Heart right ventricle (tissue), 16 donors: ENCODE measurements at regions of chr19 and their contacts with region 1.

Region 1: DNA sequence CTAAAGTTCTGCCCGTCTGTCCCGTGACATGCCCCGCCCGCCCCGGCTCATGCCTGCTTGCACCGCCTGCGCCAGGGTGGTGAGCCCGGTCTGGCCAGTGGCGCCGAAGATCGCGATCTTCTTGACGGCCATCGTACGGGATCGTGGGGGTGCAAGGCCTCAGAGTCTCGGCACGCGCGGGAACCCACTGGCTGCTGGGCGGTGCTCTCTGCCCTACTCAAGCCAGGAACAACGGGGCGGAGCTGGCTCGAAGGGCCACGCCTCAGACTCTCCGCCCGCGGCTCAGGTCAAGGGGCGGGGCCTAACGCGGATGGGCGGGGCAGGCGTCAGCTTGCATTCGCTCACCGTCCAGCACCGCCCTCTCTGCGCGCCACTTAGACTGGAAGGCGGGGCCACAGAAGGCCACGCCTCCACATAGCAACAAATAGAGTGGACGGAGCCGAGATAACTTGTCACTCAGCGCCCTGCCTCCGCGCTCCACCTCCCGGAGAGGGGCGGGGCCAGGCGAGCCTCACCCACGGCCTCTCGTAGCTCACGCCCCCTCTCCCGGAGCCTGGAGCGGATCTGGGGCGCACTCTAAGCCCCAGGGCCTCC is at the start of gene BLVRB:
- DNase-seq: peak; percentile 99 to 100
- ATAC-seq: peak; percentile 94 to 98 (median 97)
- H3K4me3 ChIP-seq: peak within 1 kb of the TSS; percentile 49 to 97 (median 74)
- H3K27ac ChIP-seq: peak within 1 kb of the TSS; percentile 70 to 94 (median 86)
- H3K4me1 ChIP-seq: peaks cover 6 to 50% (median 26%) of the 10 kb centered on the region in 9 donors
- H3K27me3 ChIP-seq: peaks cover 0 to 26% (median 0%) of the 10 kb centered on the region in 7 donors
- CTCF ChIP-seq: no peak
- total RNA-seq, gene BLVRB: 70.9 to 144 (median 91.4) TPM

Region 2: GRCh38 chr19:40341601-40342482 is 123.8 kb before region 1 on chr19:
- intact Hi-C with region 1: no loop called
- DNase-seq: peak; percentile 75 to 80
- ATAC-seq: peak; percentile 86 to 99 (median 96)
- H3K4me3 ChIP-seq: peak overlapping the region in 6 of 10 donors; percentile 1 to 33 (median 22)
- H3K27ac ChIP-seq: peak overlapping the region; percentile 63 to 90 (median 84)
- H3K4me1 ChIP-seq: peaks cover 0 to 46% (median 20%) of the 10 kb centered on the region in 9 donors
- H3K27me3 ChIP-seq: no peaks in the 10 kb centered on the region
- CTCF ChIP-seq: no peak

Region 3: DNA sequence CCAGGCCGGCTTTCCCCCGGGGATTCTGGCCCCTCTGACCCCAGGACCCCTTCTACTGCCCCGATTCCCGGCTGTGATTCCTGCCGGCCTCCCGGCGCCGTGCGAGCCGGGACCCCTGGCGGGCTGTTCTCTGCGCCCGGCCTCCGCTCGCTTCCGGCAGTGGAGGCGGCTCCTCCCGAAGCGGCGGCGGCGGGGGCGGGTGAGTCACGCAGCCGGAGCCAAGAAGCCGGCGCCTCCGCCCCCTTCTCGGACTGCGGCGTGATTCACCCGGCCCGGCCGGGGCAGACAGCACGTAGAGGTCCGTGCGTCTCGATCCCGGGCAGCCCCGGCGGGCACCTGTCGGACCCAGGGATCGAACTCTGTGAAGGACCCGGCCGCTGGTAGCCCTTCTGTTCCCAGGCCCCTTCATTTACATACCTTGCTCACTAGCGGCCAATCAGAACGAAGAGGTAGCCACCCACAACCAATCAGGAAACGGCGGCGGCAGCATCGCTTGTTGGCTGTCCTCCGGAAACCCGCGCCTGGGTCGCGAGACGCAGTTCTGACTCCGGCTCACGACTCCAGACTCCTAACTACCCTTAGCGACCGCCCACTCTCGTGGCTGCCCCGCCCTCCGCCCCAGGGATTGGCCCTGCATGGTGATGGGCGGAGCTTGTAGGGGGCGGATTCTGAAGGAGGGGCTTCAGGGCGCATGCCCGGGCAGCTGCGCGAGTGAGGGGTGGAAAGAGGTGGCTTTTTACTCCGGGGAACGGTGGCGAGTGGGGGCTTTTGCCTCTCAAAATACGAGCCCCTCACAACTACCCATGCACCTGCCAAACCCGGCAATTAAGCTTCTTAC is 40.0 kb before region 1 on chr19 and contains the start of gene SERTAD1:
- intact Hi-C with region 1: loop called in 1 of 10 experiments (anchors 1 kb)
- DNase-seq: peak; percentile 100
- ATAC-seq: peak; percentile 89 to 95 (median 94)
- H3K4me3 ChIP-seq: peak within 1 kb of the TSS; percentile 66 to 91 (median 82)
- H3K27ac ChIP-seq: peak within 1 kb of the TSS; percentile 93 to 100 (median 98)
- H3K4me1 ChIP-seq: peaks cover 5 to 48% (median 40%) of the 10 kb centered on the region in 9 donors
- H3K27me3 ChIP-seq: no peaks in the 10 kb centered on the region
- CTCF ChIP-seq: peak in 8 of 9 donors; percentile 58 to 88 (median 83)
- total RNA-seq, gene SERTAD1: 6.3 to 16.8 (median 8.4) TPM

Region 4: DNA sequence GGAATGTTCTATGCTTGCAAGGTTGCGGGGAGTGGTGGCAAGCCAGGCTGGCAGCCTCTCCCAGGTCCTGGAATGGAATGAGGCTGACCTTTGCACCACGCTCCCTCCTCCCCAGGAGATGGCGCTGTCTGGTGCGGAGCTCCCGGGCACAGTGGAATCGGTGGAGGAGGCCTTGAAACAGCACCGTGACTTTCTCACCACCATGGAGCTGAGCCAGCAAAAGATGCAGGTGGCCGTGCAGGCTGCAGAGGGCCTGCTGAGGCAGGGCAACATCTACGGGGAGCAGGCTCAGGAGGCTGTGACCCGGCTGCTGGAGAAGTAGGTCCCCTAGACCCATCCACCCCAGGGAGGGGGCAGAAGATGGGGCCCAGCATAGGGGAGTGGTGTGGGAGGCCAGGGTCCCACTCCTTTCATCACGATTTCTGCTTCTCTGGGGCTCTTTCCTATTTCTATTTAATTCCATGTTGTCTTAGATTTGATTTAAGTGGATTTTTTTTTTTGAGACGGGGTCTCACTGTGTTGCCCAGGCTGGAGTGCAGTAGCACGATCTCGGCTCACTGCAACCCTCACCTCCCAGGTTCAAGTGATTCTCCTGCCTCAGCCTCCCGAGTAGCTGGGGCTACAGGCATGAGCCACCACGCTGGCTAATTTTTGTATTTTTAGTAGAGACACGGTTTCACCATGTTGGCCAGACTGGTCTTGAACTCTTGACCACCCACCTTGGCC is 57.8 kb after region 1 on chr19:
- intact Hi-C with region 1: loop called in 3 of 10 experiments (anchors 2 to 10 kb)
- DNase-seq: peak; percentile 35 to 36
- ATAC-seq: peak in 6 of 8 donors; percentile 32 to 71 (median 48)
- H3K4me3 ChIP-seq: no peak overlapping the region
- H3K27ac ChIP-seq: no peak overlapping the region
- H3K4me1 ChIP-seq: peaks cover 0 to 15% (median 0%) of the 10 kb centered on the region in 9 donors
- H3K27me3 ChIP-seq: peaks cover 0 to 24% (median 14%) of the 10 kb centered on the region in 7 donors
- CTCF ChIP-seq: peak in 7 of 9 donors; percentile 45 to 64 (median 51)

Region 5: DNA sequence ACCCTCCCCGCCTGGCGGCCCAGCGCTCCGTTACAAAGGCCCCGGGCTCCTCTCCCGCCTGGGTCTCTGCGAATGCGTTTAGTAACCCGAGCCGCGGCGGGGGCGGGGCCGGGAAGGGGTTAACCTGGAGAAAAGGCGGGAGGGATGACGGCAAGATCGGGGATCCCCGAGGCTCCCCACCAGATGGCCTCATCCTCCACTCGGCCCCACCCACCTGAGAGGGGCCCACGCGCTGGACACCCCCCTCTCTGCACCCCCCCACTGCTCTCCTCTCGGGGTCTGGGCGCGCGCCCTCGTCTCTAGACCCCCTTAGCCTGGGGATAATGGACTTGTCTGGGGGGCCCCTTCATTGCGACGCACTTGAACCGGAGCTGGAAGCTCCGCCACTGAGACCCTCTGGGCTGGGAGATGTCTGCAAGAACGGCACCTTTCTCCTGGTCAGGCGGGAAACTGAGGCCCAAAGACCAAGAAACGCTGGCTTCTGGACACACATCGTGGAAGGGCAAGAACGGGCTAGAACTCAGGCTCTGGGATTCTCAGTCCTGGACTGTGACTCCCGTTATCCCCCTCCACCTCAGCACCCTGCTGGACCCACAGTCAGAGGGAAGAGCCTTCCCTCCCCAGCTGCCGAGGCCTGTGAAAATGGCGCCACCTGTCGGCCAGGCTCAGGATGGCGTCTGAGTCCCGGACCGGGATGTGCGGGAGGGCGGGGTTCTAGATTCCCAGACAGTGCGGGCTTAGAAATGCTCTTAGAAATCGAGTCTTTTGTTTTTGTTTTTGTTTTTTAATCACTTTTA is 132.7 kb after region 1 on chr19:
- intact Hi-C with region 1: loop called in 6 of 10 experiments (anchors 2 to 10 kb)
- DNase-seq: peak; percentile 90
- ATAC-seq: peak; percentile 59 to 82 (median 68)
- H3K4me3 ChIP-seq: peak overlapping the region in 7 of 10 donors; percentile 8 to 81 (median 50)
- H3K27ac ChIP-seq: peak overlapping the region in 5 of 10 donors; percentile 41 to 96 (median 94)
- H3K4me1 ChIP-seq: peaks cover 24 to 64% (median 60%) of the 10 kb centered on the region in 9 donors
- H3K27me3 ChIP-seq: peaks cover 0 to 70% (median 29%) of the 10 kb centered on the region in 7 donors
- CTCF ChIP-seq: peak; percentile 95 to 100 (median 98)

Region 6: DNA sequence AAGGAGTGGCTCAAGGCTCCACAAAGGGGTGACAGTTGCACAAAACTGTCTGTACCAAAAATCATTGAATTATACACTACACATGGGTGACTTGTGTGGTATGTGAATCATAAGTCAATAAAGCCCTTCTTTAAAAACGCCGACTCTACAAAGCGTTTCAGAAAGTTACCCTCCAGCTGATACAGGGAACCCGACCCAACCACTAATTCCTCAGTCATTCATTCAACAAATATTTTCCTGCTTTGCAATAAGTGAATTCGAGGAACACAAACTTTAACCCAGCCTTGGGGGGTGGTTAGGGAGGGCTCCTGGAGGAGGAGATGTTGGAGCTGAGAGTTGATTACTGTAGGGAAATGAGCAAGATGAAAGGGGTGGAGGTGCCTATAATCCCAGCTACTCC is 167.6 kb after region 1 on chr19:
- intact Hi-C with region 1: loop called in 1 of 10 experiments (anchors 10 kb)
- DNase-seq: no peak
- ATAC-seq: no peak
- H3K4me3 ChIP-seq: no peak overlapping the region
- H3K27ac ChIP-seq: peak overlapping the region in 1 of 10 donors; percentile 58
- H3K4me1 ChIP-seq: peaks cover 0 to 19% (median 7%) of the 10 kb centered on the region in 9 donors
- H3K27me3 ChIP-seq: no peaks in the 10 kb centered on the region
- CTCF ChIP-seq: no peak